PC-3 (cell line): ENCODE measurements at regions of chr4 and their contacts with region 1.

Region 1: GRCh38 chr4:92234393-92235176 is 69.2 kb upstream of the GRID2 start:
- DNase-seq: peak; percentile 98
- ATAC-seq: peak; percentile 85
- H3K4me3 ChIP-seq: peak overlapping the region; percentile 38; the same call in 1 of the 2 replicates
- H3K27ac ChIP-seq: peak overlapping the region; percentile 92
- H3K4me1 ChIP-seq: peaks cover 72% of the 10 kb centered on the region
- H3K27me3 ChIP-seq: no peaks in the 10 kb centered on the region
- CTCF ChIP-seq: no peak

Region 2: GRCh38 chr4:91734682-91735081 is 499.9 kb before region 1 on chr4:
- CTCF ChIA-PET with region 1: no interaction called
- POLR2A ChIA-PET with region 1: no interaction called
- intact Hi-C with region 1: loop called (anchors 10 kb)
- DNase-seq: peak; percentile 43
- ATAC-seq: 0 out of 2 replicates have a peak, but pooled peaks have one; percentile 29
- H3K4me3 ChIP-seq: no peak overlapping the region
- H3K27ac ChIP-seq: no peak overlapping the region
- H3K4me1 ChIP-seq: no peaks in the 10 kb centered on the region
- H3K27me3 ChIP-seq: no peaks in the 10 kb centered on the region
- CTCF ChIP-seq: peak; percentile 56

Region 3: GRCh38 chr4:92060333-92060732 is 174.3 kb before region 1 on chr4:
- CTCF ChIA-PET with region 1: no interaction called
- POLR2A ChIA-PET with region 1: no interaction called
- intact Hi-C with region 1: no loop called
- DNase-seq: no peak
- ATAC-seq: no peak
- H3K4me3 ChIP-seq: no peak overlapping the region
- H3K27ac ChIP-seq: no peak overlapping the region
- H3K4me1 ChIP-seq: peaks cover 8% of the 10 kb centered on the region
- H3K27me3 ChIP-seq: no peaks in the 10 kb centered on the region
- CTCF ChIP-seq: no peak

Region 4: DNA sequence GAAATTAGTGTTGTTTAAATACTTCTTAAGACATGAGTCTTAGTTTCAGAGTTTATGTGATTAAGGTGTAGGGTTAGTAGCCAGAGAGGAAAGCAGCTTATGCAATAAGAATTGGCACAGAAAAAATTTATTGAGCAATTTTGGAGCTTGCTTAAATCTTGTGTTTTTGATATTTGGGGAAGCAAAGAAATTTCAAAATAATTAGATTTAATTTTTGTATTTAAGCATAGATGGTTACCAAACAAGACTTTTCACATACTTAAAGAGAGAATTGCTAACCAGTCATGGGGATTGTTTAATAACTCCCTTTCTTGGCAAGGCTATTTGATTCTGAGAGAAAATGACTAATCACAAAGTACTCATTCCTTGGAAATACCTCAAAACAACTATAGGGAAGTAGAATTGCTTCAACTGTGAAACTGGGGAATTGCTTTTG is 132.8 kb before region 1 on chr4:
- CTCF ChIA-PET with region 1: no interaction called
- POLR2A ChIA-PET with region 1: no interaction called
- intact Hi-C with region 1: loop called (anchors 5 kb)
- DNase-seq: peak; percentile 79
- ATAC-seq: peak; percentile 81
- H3K4me3 ChIP-seq: no peak overlapping the region
- H3K27ac ChIP-seq: peak overlapping the region; percentile 77
- H3K4me1 ChIP-seq: peaks cover 19% of the 10 kb centered on the region
- H3K27me3 ChIP-seq: no peaks in the 10 kb centered on the region
- CTCF ChIP-seq: no peak

Region 5: GRCh38 chr4:92483362-92483761 is 248.8 kb after region 1 on chr4:
- CTCF ChIA-PET with region 1: no interaction called
- POLR2A ChIA-PET with region 1: no interaction called
- intact Hi-C with region 1: no loop called
- DNase-seq: peak; percentile 15
- ATAC-seq: no peak
- H3K4me3 ChIP-seq: no peak overlapping the region
- H3K27ac ChIP-seq: no peak overlapping the region
- H3K4me1 ChIP-seq: no peaks in the 10 kb centered on the region
- H3K27me3 ChIP-seq: no peaks in the 10 kb centered on the region
- CTCF ChIP-seq: no peak

Region 6: DNA sequence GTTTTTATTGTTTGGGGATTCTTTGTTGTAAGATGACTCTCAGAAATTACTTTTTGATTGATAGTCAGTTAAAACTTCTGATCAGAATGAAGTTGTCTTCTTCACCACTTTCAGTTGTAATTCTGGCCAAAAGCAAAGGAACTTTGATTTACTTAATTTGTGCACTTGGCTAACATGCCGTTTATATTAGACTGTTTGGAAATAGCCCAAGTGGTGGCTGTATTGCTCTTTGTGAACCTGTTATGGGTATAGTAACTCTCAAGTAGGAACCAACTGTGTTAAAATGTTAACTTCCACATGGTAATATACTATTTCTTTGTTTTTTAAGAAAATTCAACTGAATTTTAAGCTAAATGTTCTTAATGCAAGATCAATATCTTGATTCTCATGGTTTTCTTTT is 651.0 kb after region 1 on chr4:
- CTCF ChIA-PET with region 1: no interaction called
- POLR2A ChIA-PET with region 1: no interaction called
- intact Hi-C with region 1: no loop called
- DNase-seq: no peak
- ATAC-seq: no peak
- H3K4me3 ChIP-seq: no peak overlapping the region
- H3K27ac ChIP-seq: no peak overlapping the region
- H3K4me1 ChIP-seq: no peaks in the 10 kb centered on the region
- H3K27me3 ChIP-seq: no peaks in the 10 kb centered on the region
- CTCF ChIP-seq: no peak

Region 7: DNA sequence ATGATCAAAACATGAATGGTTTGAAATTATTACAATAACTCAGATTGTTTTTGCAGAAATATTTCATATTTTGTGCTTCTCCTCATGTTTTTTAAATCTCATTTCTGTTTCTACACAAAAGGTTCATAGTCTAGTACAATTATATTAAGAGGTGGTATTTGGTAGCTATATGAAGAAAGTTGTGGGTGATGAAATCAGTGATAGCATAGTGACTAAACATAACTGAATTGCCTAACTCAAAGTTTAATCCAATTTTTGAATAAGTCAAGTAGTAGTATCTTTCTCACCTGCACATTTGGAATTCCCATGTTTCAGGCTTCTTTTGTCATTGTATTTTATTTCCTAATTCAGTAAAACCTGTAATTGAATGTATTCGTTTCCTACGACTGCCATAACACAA is 717.8 kb after region 1 on chr4:
- CTCF ChIA-PET with region 1: no interaction called
- POLR2A ChIA-PET with region 1: no interaction called
- intact Hi-C with region 1: loop called (anchors 5 kb)
- DNase-seq: peak; percentile 42
- ATAC-seq: no peak
- H3K4me3 ChIP-seq: no peak overlapping the region
- H3K27ac ChIP-seq: peak overlapping the region; percentile 62
- H3K4me1 ChIP-seq: peaks cover 19% of the 10 kb centered on the region
- H3K27me3 ChIP-seq: no peaks in the 10 kb centered on the region
- CTCF ChIP-seq: no peak